MCF 10A (cell line): ENCODE measurements at regions of chr3 and their contacts with region 1.

Region 1: DNA sequence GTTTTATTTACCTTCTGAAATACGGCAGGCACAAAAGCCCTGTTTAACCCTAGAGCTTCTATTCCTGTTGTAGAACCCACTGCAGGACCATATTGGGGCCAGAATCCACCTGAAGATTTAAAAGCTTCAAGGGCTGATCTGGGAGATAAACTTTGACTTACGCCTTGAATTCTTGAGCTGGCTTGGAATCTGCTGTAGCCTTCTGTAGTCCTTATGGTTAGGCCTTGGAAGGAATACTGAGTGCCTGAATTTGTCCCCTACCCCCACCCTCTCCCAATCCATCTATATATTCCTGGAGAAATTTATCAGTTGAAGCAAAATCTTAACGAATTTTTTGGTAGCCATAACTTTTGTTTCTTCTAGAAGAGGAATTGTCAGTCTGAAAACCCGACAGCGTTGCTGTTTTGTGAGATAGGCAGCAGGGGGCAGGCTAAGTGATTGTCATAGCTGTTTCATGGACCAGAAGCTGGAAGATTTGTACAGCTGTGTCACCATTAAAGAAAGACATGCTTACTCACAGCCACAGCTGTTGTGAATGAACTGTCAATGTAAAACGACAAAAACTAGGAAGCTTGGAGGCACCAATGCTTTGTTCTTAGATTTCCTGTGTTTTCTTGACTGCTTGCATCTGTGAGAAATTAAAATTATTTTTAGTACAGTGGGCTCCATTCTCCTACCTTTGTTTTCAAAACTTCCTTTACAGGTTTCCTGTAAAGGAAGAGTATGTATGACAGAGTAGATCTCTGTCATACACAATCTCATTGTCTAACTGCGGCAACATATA is 12.8 kb downstream of the LXN start:
- DNase-seq: peak; percentile 74
- H3K4me3 Mint-ChIP-seq: no peak overlapping the region
- H3K27ac Mint-ChIP-seq: no peak overlapping the region
- H3K4me1 Mint-ChIP-seq: no peaks in the 10 kb centered on the region
- H3K27me3 Mint-ChIP-seq: no peaks in the 10 kb centered on the region
- CTCF ChIP-seq: peak; percentile 69

Region 2: GRCh38 chr3:158539414-158540014 is 120.1 kb before region 1 on chr3:
- CTCF ChIA-PET with region 1: interaction called, 17 read pairs
- POLR2A ChIA-PET with region 1: no interaction called
- intact Hi-C with region 1: no loop called
- DNase-seq: peak; percentile 61
- H3K4me3 Mint-ChIP-seq: no peak overlapping the region
- H3K27ac Mint-ChIP-seq: no peak overlapping the region
- H3K4me1 Mint-ChIP-seq: no peaks in the 10 kb centered on the region
- H3K27me3 Mint-ChIP-seq: no peaks in the 10 kb centered on the region
- CTCF ChIP-seq: peak; percentile 51

Region 3: GRCh38 chr3:158644345-158644908 is 15.2 kb before region 1 on chr3 and contains the start of gene GFM1:
- CTCF ChIA-PET with region 1: interaction called, 52 read pairs
- POLR2A ChIA-PET with region 1: interaction called, 5 read pairs
- intact Hi-C with region 1: no loop called
- DNase-seq: peak; percentile 96
- H3K4me3 Mint-ChIP-seq: peak within 1 kb of the TSS; percentile 93
- H3K27ac Mint-ChIP-seq: peak within 1 kb of the TSS; percentile 94
- H3K4me1 Mint-ChIP-seq: peaks cover 12% of the 10 kb centered on the region
- H3K27me3 Mint-ChIP-seq: no peaks in the 10 kb centered on the region
- CTCF ChIP-seq: peak; percentile 81
- total RNA-seq, gene GFM1: 53.9 and 54.1 TPM in 2 replicates

Region 4: DNA sequence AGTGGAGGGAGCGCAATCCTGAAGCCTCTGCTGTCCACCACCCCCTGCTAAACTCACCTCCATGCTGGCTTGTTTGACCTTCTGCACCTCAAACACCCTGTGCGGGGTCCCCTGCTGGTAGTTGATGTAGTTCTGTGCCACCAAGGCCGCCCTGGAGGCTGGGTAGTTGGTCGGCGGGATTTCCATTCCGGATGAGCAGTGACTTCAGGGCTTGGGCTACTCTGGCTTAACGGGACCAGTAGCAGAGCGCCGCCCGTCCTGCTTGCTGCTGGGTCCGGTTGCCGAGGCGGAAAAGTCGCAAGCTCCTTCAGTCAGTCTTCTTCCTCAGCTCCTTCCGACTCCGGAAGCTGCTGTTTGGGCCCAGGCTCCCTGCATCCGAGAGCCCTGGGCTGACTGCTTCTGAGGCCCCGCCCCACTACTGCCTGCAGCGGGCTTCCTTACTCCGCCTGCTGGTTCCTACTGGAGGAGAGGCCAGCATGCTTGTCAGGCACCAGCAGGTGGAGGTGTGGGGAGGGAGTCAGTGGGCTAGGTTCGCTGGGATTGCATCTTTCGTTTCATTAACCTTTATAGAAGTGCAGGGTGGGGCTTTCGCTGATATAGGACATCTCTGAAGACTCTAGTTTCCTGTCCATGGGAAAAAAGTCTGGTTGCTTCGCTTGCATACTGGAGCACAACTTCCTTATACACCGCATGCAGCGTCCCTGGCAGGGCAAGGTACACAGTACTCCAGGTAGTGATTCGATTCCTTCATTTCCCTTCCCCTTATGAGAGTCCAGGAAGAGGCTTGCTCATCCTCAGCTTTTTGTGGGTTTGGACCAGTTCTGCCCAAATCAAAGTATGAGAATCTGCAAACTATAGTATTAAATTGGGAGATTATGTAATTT is 12.9 kb after region 1 on chr3 and contains the start of gene LXN:
- CTCF ChIA-PET with region 1: interaction called, 10 read pairs
- POLR2A ChIA-PET with region 1: interaction called, 12 read pairs
- intact Hi-C with region 1: no loop called
- DNase-seq: peak; percentile 92
- H3K4me3 Mint-ChIP-seq: peak within 1 kb of the TSS; percentile 79
- H3K27ac Mint-ChIP-seq: peak within 1 kb of the TSS; percentile 87
- H3K4me1 Mint-ChIP-seq: peaks cover 16% of the 10 kb centered on the region
- H3K27me3 Mint-ChIP-seq: no peaks in the 10 kb centered on the region
- CTCF ChIP-seq: peak; percentile 51
- total RNA-seq, gene LXN: 3.4 and 4.4 TPM in 2 replicates

Region 5: GRCh38 chr3:158683216-158683962 is 23.7 kb after region 1 on chr3:
- CTCF ChIA-PET with region 1: interaction called, 10 read pairs
- POLR2A ChIA-PET with region 1: no interaction called
- intact Hi-C with region 1: no loop called
- DNase-seq: no peak
- H3K4me3 Mint-ChIP-seq: no peak overlapping the region
- H3K27ac Mint-ChIP-seq: no peak overlapping the region
- H3K4me1 Mint-ChIP-seq: no peaks in the 10 kb centered on the region
- H3K27me3 Mint-ChIP-seq: no peaks in the 10 kb centered on the region
- CTCF ChIP-seq: no peak

Region 6: GRCh38 chr3:159252772-159253384 is 593.2 kb after region 1 on chr3:
- CTCF ChIA-PET with region 1: no interaction called
- POLR2A ChIA-PET with region 1: no interaction called
- intact Hi-C with region 1: loop called (anchors 5 kb)
- DNase-seq: peak; percentile 54
- H3K4me3 Mint-ChIP-seq: no peak overlapping the region
- H3K27ac Mint-ChIP-seq: no peak overlapping the region
- H3K4me1 Mint-ChIP-seq: no peaks in the 10 kb centered on the region
- H3K27me3 Mint-ChIP-seq: peaks cover 61% of the 10 kb centered on the region
- CTCF ChIP-seq: peak; percentile 76